ENCODE measurements at regions of chr17 and their contacts with region 1.

Region 1: DNA sequence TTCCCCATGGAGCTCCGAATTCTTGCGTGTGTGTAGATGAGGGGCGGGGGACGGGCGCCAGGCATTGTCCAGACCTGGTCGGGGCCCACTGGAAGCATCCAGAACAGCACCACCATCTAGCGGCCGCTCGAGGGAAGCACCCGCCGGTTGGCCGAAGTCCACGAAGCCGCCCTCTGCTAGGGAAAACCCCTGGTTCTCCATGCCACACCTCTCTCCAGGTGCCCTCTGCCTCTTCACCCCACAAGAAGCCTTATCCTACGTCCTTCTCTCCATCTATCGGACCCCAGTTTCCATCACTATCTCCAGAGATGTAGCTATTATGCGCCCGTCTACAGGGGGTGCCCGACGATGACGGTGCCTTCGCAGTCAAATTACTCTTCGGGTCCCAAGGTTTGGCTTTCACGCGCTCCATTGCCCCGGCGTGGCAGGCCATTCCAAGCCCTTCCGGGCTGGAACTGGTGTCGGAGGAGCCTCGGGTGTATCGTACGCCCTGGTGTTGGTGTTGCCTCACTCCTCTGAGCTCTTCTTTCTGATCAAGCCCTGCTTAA is 617 bp upstream of the SENP3 start:
- DNase-seq: peak; percentile 77
- ATAC-seq: peak; percentile 77
- H3K4me3 ChIP-seq: peak overlapping the region; percentile 90 to 94 (median 92)
- H3K27ac ChIP-seq: peak overlapping the region; percentile 75
- H3K4me1 ChIP-seq: peaks cover 67% of the 10 kb centered on the region
- H3K27me3 ChIP-seq: no peaks in the 10 kb centered on the region; a peak in 1 of 5 replicates
- CTCF ChIP-seq: peak; percentile 96
- EP300 ChIP-seq: no peak
- POLR2A ChIP-seq: peak in 1 of 2 experiments; percentile 51; a peak in 1 of 4 replicates
- RAD21 ChIP-seq: peak; percentile 90

Region 2: GRCh38 chr17:7351665-7352501 is 209.2 kb before region 1 on chr17 and contains the start of gene KCTD11:
- CTCF ChIA-PET with region 1: interaction called, 5 read pairs
- POLR2A ChIA-PET with region 1: interaction called, 3 read pairs
- in situ Hi-C with region 1: no loop called
- intact Hi-C with region 1: loop called (anchors 10 kb)
- DNase-seq: peak; percentile 73
- ATAC-seq: peak; percentile 76
- H3K4me3 ChIP-seq: peak within 1 kb of the TSS; percentile 64 to 88 (median 87)
- H3K27ac ChIP-seq: peak within 1 kb of the TSS; percentile 95
- H3K4me1 ChIP-seq: peaks cover 55% of the 10 kb centered on the region
- H3K27me3 ChIP-seq: peaks cover 0 to 5% of the 10 kb centered on the region in 2 experiments; a peak in 2 of 5 replicates
- CTCF ChIP-seq: peak; percentile 66
- EP300 ChIP-seq: no peak
- POLR2A ChIP-seq: peak in 1 of 2 experiments; percentile 84; a peak in 3 of 4 replicates
- RAD21 ChIP-seq: peak; percentile 58; the same call in 1 of the 2 replicates
- total RNA-seq, gene KCTD11: 1.3 and 1.6 TPM in 2 replicates

Region 3: GRCh38 chr17:7367083-7367482 is 194.0 kb before region 1 on chr17:
- CTCF ChIA-PET with region 1: no interaction called
- POLR2A ChIA-PET with region 1: no interaction called
- in situ Hi-C with region 1: no loop called
- intact Hi-C with region 1: no loop called
- DNase-seq: no peak
- ATAC-seq: no peak
- H3K4me3 ChIP-seq: no peak overlapping the region
- H3K27ac ChIP-seq: no peak overlapping the region
- H3K4me1 ChIP-seq: peaks cover 23% of the 10 kb centered on the region
- H3K27me3 ChIP-seq: peaks cover 0 to 14% of the 10 kb centered on the region in 2 experiments; a peak in 3 of 5 replicates
- CTCF ChIP-seq: no peak
- EP300 ChIP-seq: no peak
- POLR2A ChIP-seq: no peak
- RAD21 ChIP-seq: no peak

Region 4: DNA sequence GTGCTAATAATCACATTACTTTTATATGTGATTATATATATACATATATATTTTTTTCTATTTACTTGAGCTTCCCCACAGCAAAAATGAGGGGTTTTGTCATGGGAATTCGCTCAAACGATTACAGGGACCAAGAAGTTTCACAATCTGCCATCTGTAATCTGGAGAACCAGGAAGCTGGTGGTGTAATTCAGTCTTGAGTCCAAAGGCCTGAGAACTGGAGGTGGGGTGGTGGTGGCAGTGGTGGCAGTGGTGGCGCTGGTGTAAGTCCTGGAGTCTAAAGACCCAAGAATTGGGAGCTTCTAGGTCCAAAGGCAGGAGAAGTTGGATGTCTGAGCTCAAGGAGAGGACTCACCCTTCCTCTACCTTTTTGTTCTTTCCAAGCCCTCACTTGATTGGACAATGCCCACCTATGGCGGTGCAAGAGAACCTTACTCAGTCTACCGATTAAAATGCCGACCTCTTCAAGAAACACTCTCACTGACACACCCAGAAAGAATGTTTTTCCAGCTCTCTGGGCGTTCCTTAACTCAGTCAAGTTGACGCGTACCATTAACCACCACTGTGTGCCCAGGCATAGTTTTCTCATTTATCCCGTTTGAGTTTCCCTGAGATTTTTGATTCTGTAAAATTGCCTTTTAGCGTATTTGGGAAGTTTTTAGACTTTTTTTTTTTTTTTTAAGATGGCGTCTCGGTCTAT is 45.0 kb before region 1 on chr17:
- CTCF ChIA-PET with region 1: interaction called, 43 read pairs
- POLR2A ChIA-PET with region 1: interaction called, 24 read pairs
- in situ Hi-C with region 1: loop called (anchors 5 kb)
- intact Hi-C with region 1: loop called (anchors 1 kb)
- DNase-seq: peak; percentile 20
- ATAC-seq: no peak
- H3K4me3 ChIP-seq: no peak overlapping the region
- H3K27ac ChIP-seq: no peak overlapping the region
- H3K4me1 ChIP-seq: peaks cover 5% of the 10 kb centered on the region
- H3K27me3 ChIP-seq: no peaks in the 10 kb centered on the region
- CTCF ChIP-seq: no peak
- EP300 ChIP-seq: no peak
- POLR2A ChIP-seq: no peak
- RAD21 ChIP-seq: no peak

Region 5: GRCh38 chr17:7523033-7523432 is 38.1 kb before region 1 on chr17:
- CTCF ChIA-PET with region 1: interaction called, 27 read pairs
- POLR2A ChIA-PET with region 1: interaction called, 4 read pairs
- in situ Hi-C with region 1: no loop called
- intact Hi-C with region 1: loop called (anchors 2 kb)
- DNase-seq: peak; percentile 43
- ATAC-seq: peak; percentile 70
- H3K4me3 ChIP-seq: no peak overlapping the region
- H3K27ac ChIP-seq: no peak overlapping the region
- H3K4me1 ChIP-seq: no peaks in the 10 kb centered on the region
- H3K27me3 ChIP-seq: peaks cover 0 to 1% of the 10 kb centered on the region in 2 experiments; a peak in 1 of 5 replicates
- CTCF ChIP-seq: peak; percentile 62
- EP300 ChIP-seq: no peak
- POLR2A ChIP-seq: no peak
- RAD21 ChIP-seq: no peak

Region 6: GRCh38 chr17:7548585-7549400 is 12.3 kb before region 1 on chr17 and contains the start of gene TNFSF12:
- CTCF ChIA-PET with region 1: interaction called, 3 read pairs
- POLR2A ChIA-PET with region 1: interaction called, 18 read pairs
- in situ Hi-C with region 1: no loop called
- intact Hi-C with region 1: no loop called
- DNase-seq: no peak
- ATAC-seq: peak; percentile 75
- H3K4me3 ChIP-seq: peak within 1 kb of the TSS; percentile 55 to 70 (median 65)
- H3K27ac ChIP-seq: no peak within 1 kb of the TSS
- H3K4me1 ChIP-seq: peaks cover 61% of the 10 kb centered on the region
- H3K27me3 ChIP-seq: peaks cover 0 to 3% of the 10 kb centered on the region in 2 experiments; a peak in 3 of 5 replicates
- CTCF ChIP-seq: peak; percentile 15; the same call in 1 of the 2 replicates
- EP300 ChIP-seq: no peak
- POLR2A ChIP-seq: peak in 1 of 2 experiments; percentile 44; a peak in 1 of 4 replicates
- RAD21 ChIP-seq: no peak
- total RNA-seq, gene TNFSF12: 0.73 and 0.93 TPM in 2 replicates

Region 7: GRCh38 chr17:7572588-7573323 is 11.7 kb after region 1 on chr17:
- CTCF ChIA-PET with region 1: no interaction called
- POLR2A ChIA-PET with region 1: interaction called, 12 read pairs
- in situ Hi-C with region 1: no loop called
- intact Hi-C with region 1: no loop called
- DNase-seq: peak; percentile 98
- ATAC-seq: no peak; the same call in 2 of the 3 replicates
- H3K4me3 ChIP-seq: peak overlapping the region; percentile 89 to 96 (median 94)
- H3K27ac ChIP-seq: peak overlapping the region; percentile 93
- H3K4me1 ChIP-seq: peaks cover 51% of the 10 kb centered on the region
- H3K27me3 ChIP-seq: no peaks in the 10 kb centered on the region; a peak in 1 of 5 replicates
- CTCF ChIP-seq: 0 out of 2 replicates have a peak, but pooled peaks have one; percentile 2
- EP300 ChIP-seq: no peak
- POLR2A ChIP-seq: peak; percentile 96 to 98
- RAD21 ChIP-seq: no peak; the same call in none of the 2 replicates

Region 8: DNA sequence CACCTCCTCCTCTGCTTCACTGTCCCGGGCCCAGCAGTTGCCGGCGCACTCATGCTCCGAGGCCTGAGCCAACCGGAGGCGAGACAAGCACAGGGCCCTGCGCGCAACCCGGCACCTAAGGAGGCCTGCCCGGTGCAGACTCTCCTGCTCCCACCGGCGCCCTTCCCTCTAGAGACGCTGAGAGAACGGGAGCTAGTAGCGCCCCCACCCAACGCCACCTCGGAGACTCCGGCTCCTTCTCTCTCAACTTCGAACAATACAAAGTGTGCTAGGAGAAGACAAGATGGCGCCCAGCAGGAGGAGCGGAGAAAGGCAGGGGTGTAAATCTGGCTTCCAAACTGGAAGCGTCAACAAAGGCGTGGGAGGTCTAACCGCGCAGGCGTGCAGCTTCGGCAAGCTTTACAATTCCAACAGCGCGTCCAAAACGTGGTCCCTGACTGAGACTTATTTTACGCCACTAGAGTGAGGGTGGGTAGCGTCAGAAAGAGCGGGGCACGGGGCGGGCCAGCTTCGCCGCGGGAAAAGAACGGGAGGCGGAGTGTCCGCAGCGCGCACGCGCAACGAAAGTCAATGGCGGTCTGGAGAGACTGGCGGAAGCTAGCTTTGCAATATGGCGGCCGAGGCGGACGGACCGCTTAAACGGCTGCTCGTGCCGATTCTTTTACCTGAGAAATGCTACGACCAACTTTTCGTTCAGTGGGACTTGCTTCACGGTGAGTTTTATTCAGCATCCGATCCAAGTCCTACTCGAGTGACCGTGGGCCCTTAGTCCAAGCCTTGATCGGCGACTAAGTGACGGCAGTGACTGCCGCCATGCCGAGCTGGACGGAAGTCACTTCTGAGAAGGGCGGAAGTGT is 22.4 kb after region 1 on chr17 and contains the start of gene MPDU1:
- CTCF ChIA-PET with region 1: no interaction called
- POLR2A ChIA-PET with region 1: interaction called, 16 read pairs
- in situ Hi-C with region 1: no loop called
- intact Hi-C with region 1: no loop called
- DNase-seq: peak; percentile 81
- ATAC-seq: peak; percentile 22
- H3K4me3 ChIP-seq: peak within 1 kb of the TSS; percentile 73 to 83 (median 77)
- H3K27ac ChIP-seq: peak within 1 kb of the TSS; percentile 96
- H3K4me1 ChIP-seq: peaks cover 55% of the 10 kb centered on the region
- H3K27me3 ChIP-seq: no peaks in the 10 kb centered on the region; a peak in 1 of 5 replicates
- CTCF ChIP-seq: peak; percentile 20; the same call in 1 of the 2 replicates
- EP300 ChIP-seq: 0 out of 4 replicates have a peak, but pooled peaks of 1 of the 2 experiments have one; percentile 18
- POLR2A ChIP-seq: peak; percentile 79 to 98
- RAD21 ChIP-seq: no peak
- total RNA-seq, gene MPDU1: 59.5 and 112 TPM in 2 replicates

Measured in HepG2 (cell line).